ENCODE measurements at regions of chr1 and their contacts with region 1.

Region 1: GRCh38 chr1:212070720-212071302 is 35.3 kb downstream of the DTL start:
- DNase-seq: peak; percentile 72
- H3K4me3 Mint-ChIP-seq: no peak overlapping the region
- H3K27ac Mint-ChIP-seq: peak overlapping the region; percentile 13
- H3K4me1 Mint-ChIP-seq: no peaks in the 10 kb centered on the region
- H3K27me3 Mint-ChIP-seq: no peaks in the 10 kb centered on the region
- CTCF ChIP-seq: peak; percentile 97

Region 2: GRCh38 chr1:211698161-211699026 is 372.4 kb before region 1 on chr1:
- CTCF ChIA-PET with region 1: interaction called, 11 read pairs
- POLR2A ChIA-PET with region 1: no interaction called
- intact Hi-C with region 1: no loop called
- DNase-seq: peak; percentile 93
- H3K4me3 Mint-ChIP-seq: no peak overlapping the region
- H3K27ac Mint-ChIP-seq: no peak overlapping the region
- H3K4me1 Mint-ChIP-seq: no peaks in the 10 kb centered on the region
- H3K27me3 Mint-ChIP-seq: no peaks in the 10 kb centered on the region
- CTCF ChIP-seq: peak; percentile 100

Region 3: DNA sequence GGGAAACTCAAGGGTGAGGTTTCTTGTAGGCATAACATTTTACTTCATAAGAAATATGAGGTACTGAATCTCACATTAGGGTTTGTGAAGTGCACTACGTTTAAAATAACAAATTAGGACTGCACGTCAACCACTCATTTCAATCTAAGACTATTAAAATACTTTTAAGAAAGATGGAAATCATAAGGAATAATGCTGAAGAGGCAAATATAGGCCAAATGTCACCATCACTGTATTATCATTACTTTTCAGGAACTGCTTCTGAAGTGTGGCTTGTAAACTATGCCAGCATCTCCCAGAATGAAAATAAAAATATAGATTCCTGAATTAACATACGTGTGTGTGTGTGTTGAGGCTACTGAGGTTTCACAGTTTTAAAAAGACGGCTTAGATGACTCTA is 92.2 kb before region 1 on chr1:
- CTCF ChIA-PET with region 1: no interaction called
- POLR2A ChIA-PET with region 1: no interaction called
- intact Hi-C with region 1: no loop called
- DNase-seq: no peak
- H3K4me3 Mint-ChIP-seq: no peak overlapping the region
- H3K27ac Mint-ChIP-seq: peak overlapping the region; percentile 13
- H3K4me1 Mint-ChIP-seq: no peaks in the 10 kb centered on the region
- H3K27me3 Mint-ChIP-seq: no peaks in the 10 kb centered on the region
- CTCF ChIP-seq: no peak

Region 4: GRCh38 chr1:212089560-212090163 is 18.9 kb after region 1 on chr1:
- CTCF ChIA-PET with region 1: interaction called, 54 read pairs
- POLR2A ChIA-PET with region 1: interaction called, 20 read pairs
- intact Hi-C with region 1: no loop called
- DNase-seq: no peak
- H3K4me3 Mint-ChIP-seq: no peak overlapping the region
- H3K27ac Mint-ChIP-seq: no peak overlapping the region
- H3K4me1 Mint-ChIP-seq: peaks cover 8% of the 10 kb centered on the region
- H3K27me3 Mint-ChIP-seq: no peaks in the 10 kb centered on the region
- CTCF ChIP-seq: no peak

Region 5: DNA sequence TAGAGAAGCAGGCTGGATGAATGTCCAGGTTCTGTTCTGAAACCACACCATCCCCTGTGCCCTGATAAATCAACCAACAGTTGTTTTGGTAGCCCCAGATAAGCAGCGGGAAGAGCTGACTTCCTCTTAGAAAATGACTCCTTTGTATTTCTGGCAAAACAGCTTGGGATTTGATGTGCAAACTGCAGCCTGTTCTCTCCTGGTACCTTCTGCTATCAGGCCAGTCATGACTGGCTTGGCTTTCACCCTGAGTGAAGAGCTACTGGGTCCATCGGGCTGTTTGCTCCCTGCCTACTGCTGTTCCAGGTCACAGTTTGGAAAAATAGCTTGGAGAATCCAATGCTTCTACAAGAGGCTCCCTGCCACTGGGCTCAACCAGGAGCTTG is 81.5 kb after region 1 on chr1:
- CTCF ChIA-PET with region 1: interaction called, 11 read pairs
- POLR2A ChIA-PET with region 1: no interaction called
- intact Hi-C with region 1: no loop called
- DNase-seq: no peak
- H3K4me3 Mint-ChIP-seq: no peak overlapping the region
- H3K27ac Mint-ChIP-seq: no peak overlapping the region
- H3K4me1 Mint-ChIP-seq: no peaks in the 10 kb centered on the region
- H3K27me3 Mint-ChIP-seq: no peaks in the 10 kb centered on the region
- CTCF ChIP-seq: no peak

Region 6: DNA sequence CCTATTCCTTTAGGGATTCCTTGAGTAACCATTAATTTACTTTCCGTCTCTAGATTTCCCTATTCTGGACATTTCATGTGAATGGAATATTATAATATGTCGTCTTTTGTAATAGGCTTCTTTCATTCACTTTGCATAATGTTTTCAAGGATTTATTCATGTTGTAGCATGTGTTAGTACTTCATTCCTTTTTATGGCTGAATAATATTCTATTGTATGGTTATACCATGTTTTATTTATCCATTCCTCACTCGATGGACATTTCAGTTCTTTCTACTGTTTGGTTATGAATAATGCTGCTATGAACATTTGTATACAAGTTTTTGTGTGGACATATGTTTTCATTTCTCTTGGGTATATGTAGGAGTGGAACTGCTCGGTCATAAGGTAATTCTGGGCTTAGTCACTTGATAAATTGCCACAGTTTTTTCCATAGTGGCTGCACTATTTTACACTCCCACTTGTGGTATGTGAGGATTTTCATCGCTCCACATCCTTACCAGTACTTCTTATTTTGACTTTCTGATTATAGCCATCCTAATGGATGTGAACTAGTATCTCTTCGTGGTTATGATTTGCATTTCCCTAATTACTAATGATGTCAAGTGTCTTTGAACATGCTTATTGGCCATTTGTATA is 232.1 kb after region 1 on chr1:
- CTCF ChIA-PET with region 1: interaction called, 12 read pairs
- POLR2A ChIA-PET with region 1: no interaction called
- intact Hi-C with region 1: no loop called
- DNase-seq: no peak
- H3K4me3 Mint-ChIP-seq: no peak overlapping the region
- H3K27ac Mint-ChIP-seq: no peak overlapping the region
- H3K4me1 Mint-ChIP-seq: peaks cover 7% of the 10 kb centered on the region
- H3K27me3 Mint-ChIP-seq: no peaks in the 10 kb centered on the region
- CTCF ChIP-seq: no peak

Region 7: DNA sequence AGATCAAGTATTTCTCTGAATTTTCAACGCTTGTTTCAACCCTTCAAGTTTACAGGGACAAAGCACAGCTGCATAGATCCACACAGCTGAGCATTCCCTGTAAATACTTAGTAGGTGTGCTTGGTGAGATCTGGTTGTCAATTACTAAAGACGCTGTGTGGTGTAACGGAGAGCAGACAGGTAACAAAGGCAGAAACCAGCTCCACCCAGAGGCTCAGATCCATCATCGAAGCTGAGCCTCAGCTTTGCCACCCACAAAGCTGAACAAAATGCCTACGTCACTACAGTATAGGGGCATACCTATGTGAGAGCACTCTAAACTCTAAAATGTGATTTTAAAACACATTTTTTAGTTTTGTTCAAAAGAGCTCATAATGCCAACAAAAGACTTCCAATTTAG is 305.2 kb after region 1 on chr1:
- CTCF ChIA-PET with region 1: interaction called, 43 read pairs
- POLR2A ChIA-PET with region 1: interaction called, 3 read pairs
- intact Hi-C with region 1: no loop called
- DNase-seq: no peak
- H3K4me3 Mint-ChIP-seq: no peak overlapping the region
- H3K27ac Mint-ChIP-seq: peak overlapping the region; percentile 6
- H3K4me1 Mint-ChIP-seq: no peaks in the 10 kb centered on the region
- H3K27me3 Mint-ChIP-seq: no peaks in the 10 kb centered on the region
- CTCF ChIP-seq: no peak

Measured in MCF 10A (cell line).